Mucosa of descending colon (tissue), 3 donors: ENCODE measurements at regions of chr1 and their contacts with region 1.

Region 1: GRCh38 chr1:161225534-161226319 is at the start of gene TOMM40L:
- DNase-seq: peak; percentile 89 to 94 (median 93)
- ATAC-seq: peak; percentile 93
- H3K4me3 ChIP-seq: peak within 1 kb of the TSS; percentile 33
- H3K4me1 ChIP-seq: peaks cover 18% of the 10 kb centered on the region
- CTCF ChIP-seq: peak; percentile 38
- total RNA-seq, gene TOMM40L: 17.2 to 24.5 (median 23.5) TPM

Region 2: GRCh38 chr1:161292631-161293030 is 66.9 kb after region 1 on chr1:
- intact Hi-C with region 1: loop called in 1 of 2 experiments (anchors 5 kb)
- DNase-seq: no peak
- ATAC-seq: no peak
- H3K4me3 ChIP-seq: no peak overlapping the region
- H3K4me1 ChIP-seq: no peaks in the 10 kb centered on the region
- CTCF ChIP-seq: no peak

Region 3: GRCh38 chr1:161389691-161390558 is 164.2 kb after region 1 on chr1:
- intact Hi-C with region 1: loop called in 1 of 2 experiments (anchors 10 kb)
- DNase-seq: peak; percentile 98 to 99 (median 98)
- ATAC-seq: peak; percentile 96
- H3K4me3 ChIP-seq: peak overlapping the region; percentile 15
- H3K4me1 ChIP-seq: no peaks in the 10 kb centered on the region
- CTCF ChIP-seq: no peak